ENCODE measurements at regions of chr21 and their contacts with region 1.

Region 1: DNA sequence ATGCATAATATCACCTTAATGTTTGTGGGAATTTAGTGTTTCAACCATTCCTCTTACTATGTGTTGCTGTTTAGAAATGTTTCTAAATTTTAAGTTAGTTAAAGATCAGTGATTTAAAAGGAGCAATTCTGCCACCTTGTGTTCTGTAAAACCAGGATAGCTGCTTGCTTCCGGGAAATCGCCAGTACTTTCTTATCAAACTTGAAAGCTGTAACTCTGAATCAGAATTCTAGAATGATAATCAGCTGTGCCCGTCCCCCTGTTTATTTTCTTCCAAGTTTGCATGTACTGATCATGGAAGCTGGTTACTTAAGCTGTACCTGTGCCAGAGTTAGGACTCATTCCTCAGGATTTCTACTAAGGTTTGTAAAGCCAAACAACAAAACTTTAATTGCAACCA is 656.4 kb downstream of the LTN1 start:
- DNase-seq: peak; percentile 76
- ATAC-seq: peak; percentile 53
- H3K4me3 ChIP-seq: no peak overlapping the region
- H3K27ac ChIP-seq: no peak overlapping the region
- H3K4me1 ChIP-seq: peaks cover 9% of the 10 kb centered on the region; the same call in 1 of the 2 replicates
- H3K27me3 ChIP-seq: no peaks in the 10 kb centered on the region
- CTCF ChIP-seq: peak; percentile 88

Region 2: GRCh38 chr21:27362249-27362648 is 974.1 kb before region 1 on chr21:
- CTCF ChIA-PET with region 1: no interaction called
- POLR2A ChIA-PET with region 1: no interaction called
- intact Hi-C with region 1: loop called (anchors 10 kb)
- DNase-seq: peak; percentile 12
- ATAC-seq: peak; percentile 79
- H3K4me3 ChIP-seq: no peak overlapping the region
- H3K27ac ChIP-seq: no peak overlapping the region
- H3K4me1 ChIP-seq: no peaks in the 10 kb centered on the region
- H3K27me3 ChIP-seq: no peaks in the 10 kb centered on the region
- CTCF ChIP-seq: no peak; the same call in 1 of the 2 replicates

Region 3: DNA sequence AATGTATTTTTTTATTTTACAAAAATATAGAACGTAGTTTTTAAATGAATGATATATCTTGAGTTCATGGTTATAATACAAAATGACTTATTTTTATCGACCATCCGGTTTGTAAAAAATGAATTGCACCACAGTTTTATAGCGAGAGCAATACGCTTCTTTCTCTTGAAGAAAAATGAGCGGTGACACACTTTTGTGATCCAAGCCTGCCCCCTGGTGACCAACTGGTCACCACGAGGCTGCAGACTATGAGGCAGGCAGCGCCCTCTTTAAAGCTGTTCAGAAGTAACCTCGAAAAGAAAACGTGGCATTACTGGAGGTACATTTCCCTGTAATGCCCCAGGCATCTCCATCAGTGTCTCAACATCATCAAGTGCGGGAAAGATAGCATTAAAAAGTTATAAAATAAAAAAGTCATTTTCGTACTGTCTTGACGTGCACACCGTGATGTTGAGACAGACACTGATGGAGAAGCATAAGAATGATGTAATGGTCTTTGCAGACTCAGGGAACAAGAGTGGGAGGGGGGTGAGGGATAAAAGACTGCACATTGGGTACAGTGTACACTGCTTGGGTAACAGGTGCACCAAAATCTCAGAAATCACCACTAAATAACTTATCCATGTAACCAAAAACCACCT is 635.2 kb before region 1 on chr21:
- CTCF ChIA-PET with region 1: interaction called, 3 read pairs
- POLR2A ChIA-PET with region 1: no interaction called
- intact Hi-C with region 1: loop called (anchors 1 kb)
- DNase-seq: peak; percentile 87
- ATAC-seq: peak; percentile 97
- H3K4me3 ChIP-seq: no peak overlapping the region
- H3K27ac ChIP-seq: no peak overlapping the region
- H3K4me1 ChIP-seq: no peaks in the 10 kb centered on the region
- H3K27me3 ChIP-seq: no peaks in the 10 kb centered on the region
- CTCF ChIP-seq: peak; percentile 96

Region 4: GRCh38 chr21:28069450-28069923 is 266.8 kb before region 1 on chr21:
- CTCF ChIA-PET with region 1: no interaction called
- POLR2A ChIA-PET with region 1: no interaction called
- intact Hi-C with region 1: loop called (anchors 5 kb)
- DNase-seq: peak; percentile 17
- ATAC-seq: no peak
- H3K4me3 ChIP-seq: no peak overlapping the region
- H3K27ac ChIP-seq: no peak overlapping the region
- H3K4me1 ChIP-seq: no peaks in the 10 kb centered on the region
- H3K27me3 ChIP-seq: no peaks in the 10 kb centered on the region
- CTCF ChIP-seq: no peak

Region 5: DNA sequence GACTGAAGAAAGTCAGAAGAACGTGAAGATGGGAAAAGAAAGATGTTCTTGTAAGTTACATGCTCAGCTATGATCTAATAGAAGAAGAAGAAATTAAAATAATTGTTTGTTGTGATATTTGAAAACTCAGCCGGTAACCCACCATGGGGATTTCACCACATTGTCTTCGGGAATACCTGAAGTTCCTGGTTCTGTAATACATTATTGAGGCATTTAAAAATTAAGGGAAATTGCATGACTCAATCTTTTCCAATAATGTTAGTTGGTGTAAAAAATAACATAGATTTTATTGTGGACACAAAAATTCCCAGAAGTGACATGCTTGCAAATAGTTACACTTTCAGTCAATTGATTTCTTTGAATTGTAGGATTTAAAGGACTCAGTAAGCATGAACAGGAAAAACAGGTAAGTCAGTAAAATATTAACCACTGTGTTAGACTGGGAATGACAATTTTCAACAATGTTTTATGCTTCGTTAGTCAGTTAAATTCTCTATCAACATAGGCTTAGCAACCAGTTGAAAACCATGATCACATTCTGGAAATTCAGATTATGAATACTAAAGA is 88.8 kb before region 1 on chr21:
- CTCF ChIA-PET with region 1: no interaction called
- POLR2A ChIA-PET with region 1: no interaction called
- intact Hi-C with region 1: loop called (anchors 5 kb)
- DNase-seq: peak; percentile 33
- ATAC-seq: peak; percentile 26; the same call in 1 of the 2 replicates
- H3K4me3 ChIP-seq: no peak overlapping the region
- H3K27ac ChIP-seq: no peak overlapping the region
- H3K4me1 ChIP-seq: peaks cover 12% of the 10 kb centered on the region; the same call in 1 of the 2 replicates
- H3K27me3 ChIP-seq: no peaks in the 10 kb centered on the region
- CTCF ChIP-seq: no peak

Region 6: DNA sequence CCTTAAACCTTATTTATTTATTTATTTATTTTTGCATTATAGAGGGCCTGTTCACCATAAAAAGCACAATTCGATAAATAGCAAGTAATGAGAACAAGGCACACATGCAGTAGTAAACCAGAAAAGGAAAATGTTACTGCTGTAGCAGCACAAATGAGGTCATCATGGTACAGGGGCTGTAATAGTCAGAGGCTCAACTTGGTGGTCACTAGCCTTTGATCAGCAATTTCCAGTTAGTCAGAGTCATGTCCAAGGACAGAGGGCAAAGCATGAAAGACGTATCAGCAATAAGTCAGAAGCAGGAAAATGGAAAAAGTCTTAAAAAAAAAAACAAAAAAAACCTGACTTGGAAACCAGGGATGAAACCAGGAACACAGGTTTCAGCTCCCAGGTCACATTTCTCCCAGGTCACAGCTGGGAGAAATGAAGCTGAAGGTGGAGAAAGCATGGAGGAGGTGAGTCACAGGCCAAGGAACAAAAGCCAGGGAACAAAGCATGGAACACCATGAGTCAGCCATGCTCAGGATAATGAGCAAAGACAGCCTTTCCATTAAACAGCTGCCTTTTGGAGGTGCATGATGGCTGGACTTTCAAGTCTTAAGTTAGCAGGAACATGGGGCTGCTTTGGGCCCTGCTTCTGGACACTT is 100.1 kb after region 1 on chr21:
- CTCF ChIA-PET with region 1: no interaction called
- POLR2A ChIA-PET with region 1: no interaction called
- intact Hi-C with region 1: no loop called
- DNase-seq: peak; percentile 79
- ATAC-seq: peak; percentile 80
- H3K4me3 ChIP-seq: no peak overlapping the region
- H3K27ac ChIP-seq: peak overlapping the region; percentile 55
- H3K4me1 ChIP-seq: peaks cover 18% of the 10 kb centered on the region
- H3K27me3 ChIP-seq: no peaks in the 10 kb centered on the region
- CTCF ChIP-seq: no peak

Region 7: GRCh38 chr21:28522014-28522799 is 185.9 kb after region 1 on chr21:
- CTCF ChIA-PET with region 1: interaction called, 4 read pairs
- POLR2A ChIA-PET with region 1: no interaction called
- intact Hi-C with region 1: loop called (anchors 1 kb)
- DNase-seq: peak; percentile 54
- ATAC-seq: peak; percentile 75
- H3K4me3 ChIP-seq: no peak overlapping the region
- H3K27ac ChIP-seq: peak overlapping the region; percentile 38
- H3K4me1 ChIP-seq: peaks cover 18% of the 10 kb centered on the region
- H3K27me3 ChIP-seq: no peaks in the 10 kb centered on the region
- CTCF ChIP-seq: peak; percentile 71; the same call in 1 of the 2 replicates

Region 8: GRCh38 chr21:28943631-28944030 is 607.3 kb after region 1 on chr21:
- CTCF ChIA-PET with region 1: no interaction called
- POLR2A ChIA-PET with region 1: no interaction called
- intact Hi-C with region 1: loop called (anchors 1 kb)
- DNase-seq: no peak
- ATAC-seq: no peak
- H3K4me3 ChIP-seq: no peak overlapping the region
- H3K27ac ChIP-seq: no peak overlapping the region
- H3K4me1 ChIP-seq: no peaks in the 10 kb centered on the region
- H3K27me3 ChIP-seq: no peaks in the 10 kb centered on the region
- CTCF ChIP-seq: no peak

Measured in PC-3 (cell line).